Common myeloid progenitor, CD34-positive (primary cell): ENCODE measurements at regions of chr1 and their contacts with region 1.

Region 1: GRCh38 chr1:204989266-204990058 is 53.5 kb upstream of the CNTN2 start:
- DNase-seq: peak; percentile 80 to 90 (median 87)
- H3K4me3 ChIP-seq: no peak overlapping the region
- H3K27ac ChIP-seq: no peak overlapping the region
- H3K4me1 ChIP-seq: peaks cover 11 to 46% (median 35%) of the 10 kb centered on the region in 4 experiments
- H3K27me3 ChIP-seq: no peaks in the 10 kb centered on the region

Region 2: GRCh38 chr1:204814181-204814884 is 175.1 kb before region 1 on chr1:
- CTCF ChIA-PET with region 1: no interaction called
- POLR2A ChIA-PET with region 1: no interaction called
- DNase-seq: no peak
- H3K4me3 ChIP-seq: no peak overlapping the region
- H3K27ac ChIP-seq: no peak overlapping the region
- H3K4me1 ChIP-seq: no peaks in the 10 kb centered on the region
- H3K27me3 ChIP-seq: peaks cover 0 to 19% (median 9%) of the 10 kb centered on the region in 5 experiments

Region 3: DNA sequence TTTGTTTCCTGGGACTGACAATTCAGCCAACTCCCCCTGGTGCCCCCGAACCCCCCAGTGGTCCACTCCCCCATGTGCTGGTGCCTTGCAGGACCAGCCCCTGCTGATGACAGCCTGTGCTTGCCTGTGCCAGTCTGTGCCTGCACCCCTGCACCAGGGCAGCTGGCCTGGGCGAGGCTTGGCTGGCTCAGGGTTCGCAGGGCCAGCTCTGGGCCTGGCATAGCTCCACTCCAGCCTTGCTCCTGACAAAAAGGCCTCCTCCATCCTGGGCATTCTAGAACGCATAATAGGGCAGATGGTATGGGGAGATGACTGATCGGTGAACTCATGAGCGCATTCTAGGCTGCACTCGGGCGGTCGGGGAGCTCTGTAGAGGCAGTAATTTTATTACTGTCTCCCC is 58.9 kb after region 1 on chr1:
- CTCF ChIA-PET with region 1: interaction called, 17 read pairs
- POLR2A ChIA-PET with region 1: no interaction called
- DNase-seq: no peak
- H3K4me3 ChIP-seq: no peak overlapping the region
- H3K27ac ChIP-seq: no peak overlapping the region
- H3K4me1 ChIP-seq: peaks cover 0 to under 1% (median under 1%) of the 10 kb centered on the region in 4 experiments
- H3K27me3 ChIP-seq: peaks cover 0 to 44% (median 17%) of the 10 kb centered on the region in 5 experiments

Region 4: GRCh38 chr1:205077158-205077933 is 87.9 kb after region 1 on chr1:
- CTCF ChIA-PET with region 1: interaction called, 11 read pairs
- POLR2A ChIA-PET with region 1: no interaction called
- DNase-seq: no peak
- H3K4me3 ChIP-seq: no peak overlapping the region
- H3K27ac ChIP-seq: no peak overlapping the region
- H3K4me1 ChIP-seq: no peaks in the 10 kb centered on the region
- H3K27me3 ChIP-seq: no peaks in the 10 kb centered on the region

Region 5: DNA sequence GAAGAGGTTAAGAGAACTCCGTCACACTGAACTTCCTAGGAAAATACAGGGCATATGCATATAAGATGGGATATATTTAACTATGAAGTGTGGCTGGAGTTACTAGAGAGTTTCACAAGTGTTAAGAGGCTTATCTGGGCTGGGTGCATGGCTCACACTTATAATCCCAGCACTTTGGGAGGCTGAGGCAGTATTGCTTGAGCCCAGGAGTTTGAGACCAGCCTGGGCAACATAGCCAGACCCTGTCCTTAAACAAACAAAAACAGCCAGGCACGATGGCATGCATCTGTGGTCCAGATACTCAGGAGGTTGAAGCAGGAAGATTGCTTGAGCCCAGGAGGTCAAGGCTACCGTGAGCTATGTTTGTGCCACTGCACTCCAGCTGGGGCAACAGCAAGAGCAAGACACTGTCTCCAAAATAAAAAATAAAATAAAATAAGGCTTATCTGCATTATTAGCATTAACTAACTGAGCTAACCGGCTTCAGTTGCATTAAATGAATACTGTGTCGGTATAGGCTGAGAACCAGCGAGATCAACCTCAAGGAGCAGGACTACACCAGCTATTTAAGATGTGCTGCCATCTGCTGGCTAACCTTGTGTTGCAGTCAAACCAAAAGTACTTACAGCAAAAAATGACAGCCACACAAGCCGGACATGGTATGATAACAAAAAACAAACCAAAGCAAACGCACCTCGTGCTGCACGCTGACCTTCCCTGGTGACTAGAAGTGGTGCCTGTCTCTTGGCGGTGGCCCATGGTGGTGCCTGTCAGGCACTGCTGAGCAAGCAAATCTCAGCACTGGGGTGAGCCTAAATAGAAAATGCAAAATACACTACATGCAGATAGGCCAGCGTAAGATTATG is 152.0 kb after region 1 on chr1:
- CTCF ChIA-PET with region 1: interaction called, 10 read pairs
- POLR2A ChIA-PET with region 1: no interaction called
- DNase-seq: peak; percentile 83 to 93 (median 90)
- H3K4me3 ChIP-seq: peak overlapping the region in 1 of 7 experiments; percentile 24
- H3K27ac ChIP-seq: no peak overlapping the region
- H3K4me1 ChIP-seq: peaks cover 0 to 6% (median 4%) of the 10 kb centered on the region in 4 experiments
- H3K27me3 ChIP-seq: no peaks in the 10 kb centered on the region